ENCODE measurements at regions of chr11 and their contacts with region 1.

Region 1: GRCh38 chr11:38710262-38710661 is 2112.2 kb upstream of the RAG2 start:
- DNase-seq: no peak
- ATAC-seq: no peak
- H3K4me3 ChIP-seq: no peak overlapping the region
- H3K4me3 Mint-ChIP-seq: no peak overlapping the region
- H3K27ac ChIP-seq: no peak overlapping the region
- H3K27ac Mint-ChIP-seq: no peak overlapping the region
- H3K4me1 ChIP-seq: no peaks in the 10 kb centered on the region
- H3K4me1 Mint-ChIP-seq: no peaks in the 10 kb centered on the region
- H3K27me3 ChIP-seq: no peaks in the 10 kb centered on the region
- H3K27me3 Mint-ChIP-seq: no peaks in the 10 kb centered on the region
- CTCF ChIP-seq: no peak

Region 2: DNA sequence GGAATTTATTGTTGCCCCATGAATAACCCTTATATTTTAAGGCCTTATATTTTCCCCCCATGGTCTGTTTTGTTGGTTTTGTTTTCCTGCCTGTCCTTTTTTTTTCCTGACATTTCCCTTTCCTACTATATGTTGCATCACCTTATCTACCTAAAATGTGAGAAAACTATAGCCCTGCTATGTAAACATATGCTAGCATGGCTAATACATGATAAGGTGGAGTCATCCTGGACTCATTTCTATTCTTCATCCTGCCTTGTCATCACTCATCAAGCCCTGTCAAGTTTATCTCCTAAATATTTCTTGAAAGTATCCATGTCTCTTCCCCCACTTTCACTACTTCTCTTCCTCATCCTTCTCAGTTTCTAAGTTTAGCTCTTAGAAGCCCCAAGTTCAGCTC is 56.5 kb after region 1 on chr11:
- CTCF ChIA-PET with region 1: no interaction called
- POLR2A ChIA-PET with region 1: no interaction called
- intact Hi-C with region 1: loop called in 1 of 2 experiments (anchors 5 kb)
- DNase-seq: no peak
- ATAC-seq: no peak
- H3K4me3 ChIP-seq: no peak overlapping the region
- H3K4me3 Mint-ChIP-seq: no peak overlapping the region
- H3K27ac ChIP-seq: no peak overlapping the region
- H3K27ac Mint-ChIP-seq: no peak overlapping the region
- H3K4me1 ChIP-seq: no peaks in the 10 kb centered on the region
- H3K4me1 Mint-ChIP-seq: no peaks in the 10 kb centered on the region
- H3K27me3 ChIP-seq: no peaks in the 10 kb centered on the region
- H3K27me3 Mint-ChIP-seq: no peaks in the 10 kb centered on the region
- CTCF ChIP-seq: no peak

Region 3: GRCh38 chr11:38950867-38951266 is 240.6 kb after region 1 on chr11:
- CTCF ChIA-PET with region 1: no interaction called
- POLR2A ChIA-PET with region 1: no interaction called
- intact Hi-C with region 1: no loop called
- DNase-seq: no peak
- ATAC-seq: no peak
- H3K4me3 ChIP-seq: no peak overlapping the region
- H3K4me3 Mint-ChIP-seq: no peak overlapping the region
- H3K27ac ChIP-seq: no peak overlapping the region
- H3K27ac Mint-ChIP-seq: no peak overlapping the region
- H3K4me1 ChIP-seq: no peaks in the 10 kb centered on the region
- H3K4me1 Mint-ChIP-seq: no peaks in the 10 kb centered on the region
- H3K27me3 ChIP-seq: no peaks in the 10 kb centered on the region
- H3K27me3 Mint-ChIP-seq: no peaks in the 10 kb centered on the region
- CTCF ChIP-seq: no peak

Measured in CD8-positive, alpha-beta T cell (primary cell).